Activated CD4-positive, alpha-beta T cell treated with anti-CD3 and anti-CD28 coated beads for 36 hours (primary cell): ENCODE measurements at regions of chr16 and their contacts with region 1.

Region 1: DNA sequence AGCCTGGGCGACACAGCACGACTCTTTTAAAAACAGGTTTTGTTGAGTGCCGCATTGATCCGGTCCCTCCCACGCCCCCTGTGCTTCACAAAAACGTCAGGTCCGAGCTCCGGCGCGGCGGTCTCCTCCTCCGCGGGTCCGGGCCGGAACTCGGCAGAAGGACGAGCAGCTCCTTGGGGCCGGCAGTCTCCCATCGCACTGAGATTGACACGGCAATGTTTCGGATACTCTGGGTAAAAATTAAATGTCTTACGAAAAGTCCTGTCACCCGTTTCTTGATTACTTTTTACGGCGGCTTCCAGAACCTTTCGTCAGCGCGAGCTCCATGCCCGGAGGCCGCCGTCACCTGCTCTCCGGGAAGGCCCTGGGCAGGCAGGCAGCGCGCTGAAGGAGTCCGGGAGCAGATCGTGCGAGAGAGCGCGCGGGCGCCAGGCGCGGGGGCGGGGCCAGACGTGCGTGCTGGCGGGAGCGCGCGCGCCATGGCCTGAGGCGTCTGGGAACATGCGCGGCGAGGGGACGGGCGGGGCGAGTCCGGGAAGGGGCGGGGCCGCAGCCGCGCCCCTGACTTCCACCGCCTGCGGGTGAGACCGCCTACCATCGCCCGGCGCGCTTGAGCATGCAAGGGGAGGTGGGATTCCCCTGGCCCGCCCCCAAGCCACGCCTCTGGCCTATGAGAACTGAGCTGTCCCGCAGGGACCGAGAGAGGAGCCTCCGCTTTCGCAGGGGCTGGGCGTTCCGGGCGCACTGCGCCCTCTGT is 11.7 kb upstream of the SRL start:
- DNase-seq: peak; percentile 100
- ATAC-seq: peak; percentile 98
- H3K4me3 Mint-ChIP-seq: peak overlapping the region; percentile 92
- H3K27ac Mint-ChIP-seq: peak overlapping the region; percentile 96
- H3K4me1 Mint-ChIP-seq: peaks cover 3% of the 10 kb centered on the region
- H3K27me3 Mint-ChIP-seq: no peaks in the 10 kb centered on the region

Region 2: DNA sequence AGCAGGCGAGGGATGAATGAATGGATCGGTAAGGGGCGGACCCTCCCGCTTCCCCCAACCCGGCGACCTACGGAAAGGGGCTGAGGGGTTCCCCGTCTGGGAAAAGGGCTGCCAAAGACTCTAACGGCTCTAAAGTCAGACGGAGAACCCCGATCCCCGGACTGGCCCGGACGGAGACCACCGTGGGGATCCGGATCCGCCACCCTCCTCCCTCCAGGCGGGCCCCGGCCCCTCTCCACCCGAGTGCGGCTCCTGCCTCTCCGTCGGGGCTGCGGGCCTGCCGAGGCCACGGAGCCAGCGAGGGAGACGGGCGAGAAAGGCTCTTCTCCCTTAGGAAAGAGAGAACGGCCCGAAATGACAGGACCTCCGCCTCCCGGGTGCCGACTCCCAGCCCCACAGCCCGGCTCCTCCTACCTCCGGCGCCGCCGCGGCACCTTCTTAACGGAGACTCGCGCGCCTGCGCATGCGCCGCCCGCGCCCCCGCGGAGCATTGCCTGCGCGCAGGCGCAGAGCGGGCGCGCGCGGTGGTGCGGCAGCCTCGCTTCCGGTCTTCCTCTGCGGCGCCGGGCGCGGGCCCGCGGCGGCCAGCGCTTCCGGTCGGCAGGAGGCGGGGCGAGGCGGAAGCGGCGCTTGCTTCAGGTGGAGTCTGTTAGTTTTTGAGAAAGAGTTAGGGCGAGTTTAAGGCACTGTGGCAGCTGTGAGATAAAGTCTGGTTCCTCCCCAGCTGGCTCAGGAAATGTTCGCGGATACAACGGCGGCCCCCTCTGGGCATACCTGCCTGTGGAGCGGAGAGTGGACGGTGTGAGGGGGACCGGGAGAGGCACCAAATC is 642.2 kb before region 1 on chr16 and contains the start of gene SLX4:
- CTCF ChIA-PET with region 1: no interaction called
- POLR2A ChIA-PET with region 1: no interaction called
- intact Hi-C with region 1: loop called in 1 of 2 experiments (anchors 1 kb)
- DNase-seq: peak; percentile 95
- ATAC-seq: peak; percentile 90
- H3K4me3 Mint-ChIP-seq: peak within 1 kb of the TSS; percentile 100
- H3K27ac Mint-ChIP-seq: peak within 1 kb of the TSS; percentile 98
- H3K4me1 Mint-ChIP-seq: peaks cover 41% of the 10 kb centered on the region
- H3K27me3 Mint-ChIP-seq: no peaks in the 10 kb centered on the region
- total RNA-seq, gene SLX4: 10.7 to 11.7 TPM

Region 3: GRCh38 chr16:3880623-3881498 is 372.7 kb before region 1 on chr16 and contains the start of gene CREBBP:
- CTCF ChIA-PET with region 1: interaction called, 4 read pairs
- POLR2A ChIA-PET with region 1: interaction called, 5 read pairs
- intact Hi-C with region 1: loop called (anchors 1 to 2 kb)
- DNase-seq: peak; percentile 93
- ATAC-seq: peak; percentile 89
- H3K4me3 Mint-ChIP-seq: peak within 1 kb of the TSS; percentile 79
- H3K27ac Mint-ChIP-seq: peak within 1 kb of the TSS; percentile 69
- H3K4me1 Mint-ChIP-seq: peaks cover 36% of the 10 kb centered on the region
- H3K27me3 Mint-ChIP-seq: peaks cover 6% of the 10 kb centered on the region
- total RNA-seq, gene CREBBP: 28.1 to 37.4 TPM

Region 4: DNA sequence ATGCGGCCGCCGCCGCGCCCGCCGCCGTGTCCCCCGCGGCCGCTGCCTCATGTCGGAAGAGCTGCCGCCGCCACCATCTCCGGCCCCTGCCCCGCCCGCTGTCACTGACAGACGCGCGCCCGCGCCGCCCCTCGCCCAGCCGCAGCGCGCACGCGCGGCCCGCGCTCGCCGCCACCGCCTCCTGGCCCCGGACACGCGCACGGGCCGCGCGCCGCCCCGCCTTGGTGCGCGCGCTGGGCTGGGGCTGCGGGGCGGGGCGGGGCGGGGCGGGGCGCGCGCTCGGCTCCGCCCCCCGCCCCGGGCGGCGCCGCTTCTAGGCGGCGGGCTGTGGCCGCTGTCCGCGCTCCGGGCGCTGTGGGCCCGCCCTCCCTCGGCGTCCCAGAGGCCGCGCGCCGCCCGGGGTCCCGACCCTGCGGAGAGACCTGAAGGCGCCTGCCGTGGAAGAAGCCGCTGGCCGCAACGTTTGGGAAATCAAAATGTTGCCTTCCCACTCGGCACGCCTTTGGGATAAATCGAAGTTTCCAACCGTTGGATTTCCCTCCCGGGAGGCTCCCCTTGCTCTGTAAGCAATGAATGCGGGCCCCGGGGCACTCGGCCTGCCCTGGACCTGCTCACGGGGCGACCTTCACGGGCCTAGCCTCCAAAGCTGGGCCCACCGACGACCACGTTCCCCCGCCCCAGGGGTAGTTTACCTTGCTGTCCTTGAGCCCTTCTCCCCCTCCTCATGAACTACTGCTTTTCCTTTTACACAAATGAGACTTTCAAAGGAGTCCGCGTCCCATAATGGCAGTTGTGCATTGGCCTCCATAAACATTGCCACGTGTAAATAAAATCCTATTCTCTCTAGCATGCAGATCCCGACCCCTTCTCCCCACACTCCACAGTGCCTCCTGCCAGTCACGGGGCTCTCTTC is 137.0 kb before region 1 on chr16 and contains the start of gene ADCY9:
- CTCF ChIA-PET with region 1: interaction called, 8 read pairs
- POLR2A ChIA-PET with region 1: no interaction called
- intact Hi-C with region 1: loop called (anchors 1 kb)
- DNase-seq: peak; percentile 86
- ATAC-seq: peak; percentile 75
- H3K4me3 Mint-ChIP-seq: peak within 1 kb of the TSS; percentile 78
- H3K27ac Mint-ChIP-seq: peak within 1 kb of the TSS; percentile 78
- H3K4me1 Mint-ChIP-seq: peaks cover 36% of the 10 kb centered on the region
- H3K27me3 Mint-ChIP-seq: peaks cover 7% of the 10 kb centered on the region
- total RNA-seq, gene ADCY9: 5.3 to 6.2 TPM

Region 5: DNA sequence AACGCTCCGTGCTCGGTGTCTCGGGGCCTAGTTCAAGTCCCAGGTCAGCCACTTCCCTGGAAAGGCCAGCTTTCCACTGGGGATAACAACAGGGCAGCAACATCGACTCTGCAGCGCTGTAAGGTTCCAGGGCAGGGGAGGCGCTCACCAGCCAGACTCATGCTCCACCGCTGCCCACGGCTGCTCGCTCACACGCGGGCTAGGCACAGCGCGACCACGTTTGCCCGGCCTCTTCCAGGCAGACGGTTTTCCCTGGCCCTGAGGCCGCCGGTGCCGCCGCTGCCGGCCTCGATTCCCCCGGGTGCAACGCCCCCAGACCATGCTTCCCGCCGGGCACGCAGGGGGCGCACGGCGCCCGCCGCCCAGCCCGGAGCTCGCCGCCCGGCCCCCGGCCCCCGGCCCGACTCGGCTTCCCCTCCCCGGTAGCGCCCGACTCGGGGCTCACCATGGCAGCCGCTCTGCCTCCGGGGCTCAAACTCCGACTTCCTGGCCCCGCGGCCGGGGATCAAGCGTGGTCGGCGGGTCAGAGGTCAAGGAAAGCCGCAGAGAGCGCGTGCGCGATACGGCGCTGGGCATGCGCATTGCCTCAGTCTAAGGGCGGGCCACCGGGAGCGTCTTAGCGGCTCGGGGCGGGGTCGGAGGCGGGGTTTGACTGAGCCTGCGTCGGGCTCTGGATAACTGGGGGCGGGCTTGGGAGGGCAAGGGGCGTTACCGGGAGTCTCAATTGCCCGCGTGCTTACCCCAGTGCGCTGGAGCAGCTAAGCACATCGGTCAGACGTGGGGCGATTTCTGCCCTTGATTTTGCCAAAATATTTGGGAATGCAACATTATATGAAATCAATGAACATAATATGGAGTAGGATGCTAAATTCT is 97.5 kb after region 1 on chr16 and contains the start of gene PAM16:
- CTCF ChIA-PET with region 1: interaction called, 10 read pairs
- POLR2A ChIA-PET with region 1: interaction called, 6 read pairs
- intact Hi-C with region 1: loop called in 1 of 2 experiments (anchors 1 kb)
- DNase-seq: peak; percentile 99
- ATAC-seq: peak; percentile 96
- H3K4me3 Mint-ChIP-seq: peak within 1 kb of the TSS; percentile 89
- H3K27ac Mint-ChIP-seq: peak within 1 kb of the TSS; percentile 88
- H3K4me1 Mint-ChIP-seq: peaks cover 20% of the 10 kb centered on the region
- H3K27me3 Mint-ChIP-seq: no peaks in the 10 kb centered on the region
- total RNA-seq, gene PAM16: 62.8 to 67.8 TPM

Region 6: GRCh38 chr16:4957720-4958509 is 704.3 kb after region 1 on chr16 and contains the start of gene SEC14L5:
- CTCF ChIA-PET with region 1: no interaction called
- POLR2A ChIA-PET with region 1: no interaction called
- intact Hi-C with region 1: loop called in 1 of 2 experiments (anchors 2 kb)
- DNase-seq: peak; percentile 98
- ATAC-seq: peak; percentile 95
- H3K4me3 Mint-ChIP-seq: peak within 1 kb of the TSS; percentile 75
- H3K27ac Mint-ChIP-seq: peak within 1 kb of the TSS; percentile 1
- H3K4me1 Mint-ChIP-seq: peaks cover 12% of the 10 kb centered on the region
- H3K27me3 Mint-ChIP-seq: peaks cover 33% of the 10 kb centered on the region
- total RNA-seq, gene SEC14L5: 0.09 to 0.28 TPM